Posterior vena cava (tissue), 2 donors: ENCODE measurements at regions of chr20 and their contacts with region 1.

Region 1: DNA sequence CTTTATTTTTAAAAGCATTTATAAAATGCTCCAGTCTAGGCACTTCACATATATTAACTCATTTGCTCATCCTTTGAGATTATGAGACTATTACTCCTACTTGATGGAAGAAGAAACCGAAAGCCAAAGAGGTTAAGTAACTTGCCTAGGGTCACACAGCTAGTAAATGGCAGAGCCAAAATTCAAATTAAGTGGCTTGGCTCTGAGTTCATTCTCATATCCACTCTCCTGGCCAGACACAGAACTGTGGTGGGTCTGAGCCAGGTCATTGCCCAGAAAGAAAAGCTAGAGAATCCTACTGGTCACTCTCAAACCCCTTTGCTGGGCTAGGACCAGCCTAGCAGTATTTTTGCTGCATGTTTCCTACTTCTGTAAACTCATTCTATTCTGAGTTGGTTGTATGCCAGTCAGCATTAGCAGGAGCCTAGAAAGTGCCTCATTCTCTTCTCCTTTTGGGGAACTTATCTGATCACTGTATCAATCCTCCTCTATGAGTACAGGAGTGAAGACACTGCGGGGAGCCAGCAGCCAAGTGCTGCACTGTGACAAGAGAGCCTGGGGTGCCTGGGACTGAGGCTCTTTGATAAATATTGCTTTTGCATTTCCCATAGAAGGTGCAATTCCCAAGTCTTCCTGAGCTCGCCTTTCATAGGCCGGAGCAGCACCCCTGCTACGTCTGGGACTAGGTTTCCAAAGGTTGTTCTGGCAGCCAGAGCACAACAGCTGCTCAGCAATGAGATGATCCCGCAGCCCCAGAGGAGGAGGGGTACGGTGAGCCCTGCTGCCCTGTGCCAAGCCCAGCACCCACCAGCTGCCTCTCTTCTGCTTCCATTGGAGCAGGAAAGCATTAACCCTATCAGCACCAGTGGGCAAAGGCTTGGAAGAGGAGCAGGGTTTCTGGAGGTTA is 728.3 kb downstream of the MAFB start:
- DNase-seq: no peak

Region 2: DNA sequence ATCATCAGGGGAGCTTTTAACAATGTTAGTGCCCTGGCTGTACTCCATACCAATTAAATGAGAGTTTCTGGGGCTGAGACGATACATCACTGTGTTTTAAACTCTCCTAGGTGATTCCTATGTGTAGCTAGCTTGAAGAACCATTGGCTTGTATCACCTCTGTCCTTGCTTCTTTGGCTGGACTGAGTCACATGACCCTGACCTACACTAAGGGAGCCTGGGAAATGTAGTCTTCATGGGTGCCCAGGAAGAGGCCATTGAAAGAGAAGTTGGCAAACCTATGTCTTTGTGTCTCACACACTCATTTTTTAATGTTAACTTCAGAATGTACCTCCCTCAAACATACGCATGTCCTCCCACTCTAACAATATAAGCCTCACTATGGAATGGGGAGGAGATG is 492.1 kb before region 1 on chr20:
- intact Hi-C with region 1: no loop called
- DNase-seq: no peak

Region 3: DNA sequence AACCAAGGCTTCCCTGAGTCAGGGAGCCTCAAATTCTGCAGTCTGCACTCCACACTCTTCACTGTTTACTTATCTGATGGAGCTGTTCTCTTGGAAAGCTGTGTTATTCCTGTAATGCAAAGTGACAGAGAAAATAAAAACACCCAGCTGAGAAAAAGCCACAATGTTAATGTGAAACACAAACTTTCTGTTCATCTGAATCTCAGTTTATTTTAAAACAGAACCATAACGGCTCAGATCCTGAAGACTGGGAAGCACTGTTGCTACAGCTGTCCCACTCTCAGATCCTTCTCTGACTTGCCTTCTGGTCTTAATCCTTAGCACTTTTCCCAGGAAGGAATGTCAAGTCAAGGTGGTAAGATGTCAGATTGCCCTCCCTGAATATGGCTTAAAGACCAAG is 262.0 kb before region 1 on chr20:
- intact Hi-C with region 1: no loop called
- DNase-seq: no peak

Region 4: DNA sequence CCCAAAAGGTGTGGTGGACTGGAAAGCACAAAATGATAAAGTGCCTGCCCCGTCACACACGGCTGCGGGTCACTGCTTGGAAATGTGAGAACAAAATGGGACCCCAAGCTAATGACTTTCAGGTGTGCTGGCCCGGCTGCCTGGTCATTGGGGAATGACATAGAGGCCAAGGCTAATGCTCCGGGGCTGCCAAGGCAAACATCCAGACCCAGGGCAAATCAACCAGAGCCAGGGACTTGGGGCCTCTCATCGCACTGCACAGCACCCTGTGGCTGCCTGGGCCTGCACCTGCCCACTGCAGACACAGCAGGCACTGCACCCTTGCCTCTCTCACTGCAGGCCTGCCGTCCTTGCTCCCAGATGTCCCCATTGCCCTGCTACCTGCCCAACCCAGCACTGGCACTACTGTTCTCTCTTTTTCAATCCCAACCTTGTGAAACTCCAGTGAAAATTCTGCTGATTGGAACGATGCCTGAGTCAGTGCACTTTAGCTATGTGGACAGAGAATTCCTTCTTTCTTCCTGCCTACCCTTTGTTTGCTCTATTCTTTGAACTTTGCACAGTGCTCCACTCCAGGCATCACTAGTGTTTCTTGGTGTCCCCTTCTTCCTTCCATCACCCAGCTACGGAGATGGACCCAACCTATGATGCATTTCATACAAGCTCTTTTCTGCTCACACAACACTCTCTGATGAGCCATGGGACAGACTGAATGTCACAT is 121.2 kb before region 1 on chr20:
- intact Hi-C with region 1: loop called in 1 of 2 experiments (anchors 5 kb)
- DNase-seq: no peak

Region 5: GRCh38 chr20:39935901-39936300 is 24.9 kb before region 1 on chr20:
- intact Hi-C with region 1: no loop called
- DNase-seq: no peak